ENCODE measurements at regions of chr7 and their contacts with region 1.

Region 1: GRCh38 chr7:135459951-135460567 is 49.8 kb downstream of the CNOT4 start:
- DNase-seq: no peak
- H3K4me3 Mint-ChIP-seq: no peak overlapping the region
- H3K27ac Mint-ChIP-seq: no peak overlapping the region
- H3K4me1 Mint-ChIP-seq: peaks cover 45% of the 10 kb centered on the region
- H3K27me3 Mint-ChIP-seq: no peaks in the 10 kb centered on the region

Region 2: DNA sequence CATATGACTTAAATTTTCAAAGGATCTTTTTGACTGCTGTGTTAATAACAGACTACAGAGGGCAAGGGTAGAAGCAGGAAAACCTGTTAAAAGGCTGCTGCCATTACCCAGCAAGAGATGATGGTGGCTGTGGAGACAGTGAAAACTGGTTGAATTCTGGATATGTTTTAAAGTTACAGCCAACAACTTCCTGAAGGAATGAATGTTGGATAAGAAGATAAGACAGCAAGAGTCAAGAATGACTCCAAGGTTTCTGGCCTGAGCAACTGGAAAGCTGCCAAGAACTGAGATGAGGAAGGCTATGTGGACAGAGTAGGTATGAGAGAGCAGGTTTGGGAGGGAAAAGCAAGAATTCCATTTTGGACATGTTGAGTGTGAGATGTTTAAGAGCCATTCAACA is 30.7 kb after region 1 on chr7:
- CTCF ChIA-PET with region 1: no interaction called
- POLR2A ChIA-PET with region 1: no interaction called
- intact Hi-C with region 1: loop called (anchors 5 kb)
- DNase-seq: no peak
- H3K4me3 Mint-ChIP-seq: no peak overlapping the region
- H3K27ac Mint-ChIP-seq: no peak overlapping the region
- H3K4me1 Mint-ChIP-seq: peaks cover 19% of the 10 kb centered on the region
- H3K27me3 Mint-ChIP-seq: no peaks in the 10 kb centered on the region